Adrenal gland (tissue), 19 donors: ENCODE measurements at regions of chr2 and their contacts with region 1.

Region 1: GRCh38 chr2:113248997-113249770 is 29.5 kb downstream of the PAX8 start:
- DNase-seq: peak; percentile 79 to 93 (median 86)
- H3K4me3 ChIP-seq: no peak overlapping the region
- H3K27ac ChIP-seq: no peak overlapping the region
- H3K4me1 ChIP-seq: peaks cover 0 to 4% of the 10 kb centered on the region in 2 donors
- H3K27me3 ChIP-seq: no peaks in the 10 kb centered on the region
- CTCF ChIP-seq: peak; percentile 82 to 97 (median 92)
- POLR2A ChIP-seq: no peak

Region 2: DNA sequence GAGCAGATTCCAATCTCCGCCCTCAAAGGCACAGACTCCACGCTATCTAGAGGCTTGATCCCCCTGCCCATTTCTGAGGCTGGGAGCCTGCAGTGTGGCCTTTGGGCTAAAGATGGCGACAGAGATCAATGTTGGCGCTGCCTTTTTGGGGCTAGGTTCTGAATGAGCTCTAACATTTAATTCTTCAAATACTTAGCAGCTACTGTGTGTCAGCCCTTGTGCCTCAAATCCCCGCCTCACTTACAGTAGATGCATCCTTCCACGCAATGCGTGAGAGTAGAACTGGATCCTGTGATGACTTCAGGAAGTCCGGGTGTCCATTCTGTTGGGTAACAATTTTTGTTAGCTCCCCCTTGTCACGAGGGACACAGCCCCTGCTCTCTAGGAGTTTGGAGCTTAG is 169.1 kb before region 1 on chr2:
- intact Hi-C with region 1: no loop called
- DNase-seq: peak; percentile 35 to 65 (median 51)
- H3K4me3 ChIP-seq: no peak overlapping the region
- H3K27ac ChIP-seq: no peak overlapping the region
- H3K4me1 ChIP-seq: no peaks in the 10 kb centered on the region
- H3K27me3 ChIP-seq: no peaks in the 10 kb centered on the region
- CTCF ChIP-seq: peak; percentile 46 to 72 (median 66)
- POLR2A ChIP-seq: no peak

Region 3: GRCh38 chr2:113209011-113209641 is 40.1 kb before region 1 on chr2:
- intact Hi-C with region 1: loop called in 1 of 2 experiments (anchors 5 kb)
- DNase-seq: no peak
- H3K4me3 ChIP-seq: no peak overlapping the region
- H3K27ac ChIP-seq: no peak overlapping the region
- H3K4me1 ChIP-seq: peaks cover 11 to 27% of the 10 kb centered on the region in 2 donors
- H3K27me3 ChIP-seq: no peaks in the 10 kb centered on the region
- CTCF ChIP-seq: no peak
- POLR2A ChIP-seq: no peak